Esophagus squamous epithelium (tissue), 5 donors: ENCODE measurements at regions of chr3 and their contacts with region 1.

Region 1: GRCh38 chr3:159828542-159828943 is 160.1 kb upstream of the IL12A start:
- DNase-seq: no peak
- H3K4me3 ChIP-seq: no peak overlapping the region
- H3K27ac ChIP-seq: peak overlapping the region; percentile 18 to 54 (median 38)
- H3K4me1 ChIP-seq: peaks cover 0 to 55% (median 15%) of the 10 kb centered on the region in 3 donors
- H3K27me3 ChIP-seq: no peaks in the 10 kb centered on the region
- CTCF ChIP-seq: peak in 5 of 6 experiments; percentile 18 to 63 (median 47)
- POLR2A ChIP-seq: no peak

Region 2: DNA sequence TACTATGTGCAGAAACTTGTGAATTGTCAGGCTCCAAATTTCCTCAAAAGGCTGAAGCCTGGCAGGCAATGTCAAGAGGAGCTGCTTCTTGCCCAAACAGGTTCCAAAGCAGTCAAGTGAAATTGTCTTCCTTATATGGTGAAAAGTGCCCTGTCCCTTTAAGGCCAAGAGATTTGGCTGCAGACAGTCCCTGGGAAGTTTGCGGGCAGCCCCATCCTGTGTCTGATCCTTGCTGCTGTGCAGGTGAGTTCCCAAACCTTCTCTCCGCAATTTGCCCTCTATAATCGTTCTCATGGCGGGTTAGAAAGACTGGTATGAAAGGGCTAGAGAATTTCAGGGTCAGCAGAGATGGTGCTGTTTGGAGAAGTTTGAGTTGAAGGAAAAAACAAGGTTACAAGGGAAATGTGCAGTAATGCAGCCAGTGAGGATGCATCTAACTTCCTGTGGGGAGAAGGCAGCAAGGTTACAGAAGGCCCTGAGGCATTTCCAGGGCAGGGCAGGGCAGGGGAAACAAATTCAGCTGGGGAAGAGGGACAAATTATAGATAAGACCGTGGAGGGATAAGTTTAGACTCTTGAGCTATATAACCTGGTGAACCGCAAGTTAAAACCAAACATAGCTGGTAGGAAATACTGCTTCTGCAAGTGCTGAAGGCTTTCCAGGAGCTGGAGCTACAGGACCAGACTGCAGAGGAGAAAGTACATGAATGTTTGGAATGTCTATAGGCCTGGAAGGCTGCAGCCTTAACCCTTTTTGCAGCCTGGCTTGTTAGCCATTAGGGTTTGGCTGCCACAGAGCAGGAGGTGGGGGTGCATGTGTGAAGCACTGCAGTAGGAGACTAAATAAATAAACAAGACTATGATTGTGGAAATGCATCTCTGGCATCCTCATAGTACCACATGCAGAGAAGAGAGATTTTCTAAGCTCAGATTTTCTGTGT is 96.1 kb before region 1 on chr3:
- intact Hi-C with region 1: no loop called
- DNase-seq: no peak
- H3K4me3 ChIP-seq: peak overlapping the region in 3 of 4 donors; percentile 15 to 42 (median 31)
- H3K27ac ChIP-seq: peak overlapping the region; percentile 14 to 60 (median 27)
- H3K4me1 ChIP-seq: peaks cover 0 to 17% (median 7%) of the 10 kb centered on the region in 3 donors
- H3K27me3 ChIP-seq: no peaks in the 10 kb centered on the region
- CTCF ChIP-seq: no peak
- POLR2A ChIP-seq: no peak

Region 3: DNA sequence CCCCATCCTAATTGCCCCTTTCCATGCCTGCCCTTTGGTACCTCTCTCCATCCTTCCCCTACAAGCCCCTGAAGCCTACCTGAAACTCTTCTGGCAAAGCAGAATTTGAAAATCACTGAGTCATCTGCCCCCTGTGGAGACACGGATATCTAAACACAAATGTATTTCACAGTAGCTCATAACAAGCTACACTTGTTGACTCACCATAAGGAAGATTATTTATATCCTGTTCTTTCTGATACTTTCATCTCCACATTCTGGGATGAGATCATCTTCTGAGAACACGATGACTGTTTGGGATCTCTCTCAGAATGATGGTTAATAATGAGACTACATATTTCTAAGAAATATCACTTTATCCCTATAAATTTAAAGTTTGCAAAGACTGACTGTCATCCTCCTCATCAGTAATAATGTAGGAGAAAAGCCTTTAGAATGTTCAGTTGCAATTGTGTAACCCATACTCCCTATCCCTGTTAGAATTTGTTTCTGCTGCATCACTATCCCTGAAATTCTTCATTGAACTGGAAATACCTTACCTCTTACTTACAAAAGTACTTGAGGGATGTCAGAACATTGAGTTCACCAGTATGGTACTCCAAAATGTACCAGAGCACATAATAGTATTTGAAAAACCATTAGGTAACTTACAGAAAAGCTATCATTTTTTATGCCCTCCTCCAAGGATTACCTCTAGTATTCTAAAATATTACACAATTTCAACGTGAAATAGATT is 44.0 kb after region 1 on chr3:
- intact Hi-C with region 1: loop called (anchors 10 kb)
- DNase-seq: no peak
- H3K4me3 ChIP-seq: no peak overlapping the region
- H3K27ac ChIP-seq: peak overlapping the region in 2 of 4 donors; percentile 48 to 49
- H3K4me1 ChIP-seq: peaks cover 0 to 18% (median 4%) of the 10 kb centered on the region in 3 donors
- H3K27me3 ChIP-seq: no peaks in the 10 kb centered on the region
- CTCF ChIP-seq: peak in 1 of 6 experiments; percentile 45
- POLR2A ChIP-seq: no peak

Region 4: DNA sequence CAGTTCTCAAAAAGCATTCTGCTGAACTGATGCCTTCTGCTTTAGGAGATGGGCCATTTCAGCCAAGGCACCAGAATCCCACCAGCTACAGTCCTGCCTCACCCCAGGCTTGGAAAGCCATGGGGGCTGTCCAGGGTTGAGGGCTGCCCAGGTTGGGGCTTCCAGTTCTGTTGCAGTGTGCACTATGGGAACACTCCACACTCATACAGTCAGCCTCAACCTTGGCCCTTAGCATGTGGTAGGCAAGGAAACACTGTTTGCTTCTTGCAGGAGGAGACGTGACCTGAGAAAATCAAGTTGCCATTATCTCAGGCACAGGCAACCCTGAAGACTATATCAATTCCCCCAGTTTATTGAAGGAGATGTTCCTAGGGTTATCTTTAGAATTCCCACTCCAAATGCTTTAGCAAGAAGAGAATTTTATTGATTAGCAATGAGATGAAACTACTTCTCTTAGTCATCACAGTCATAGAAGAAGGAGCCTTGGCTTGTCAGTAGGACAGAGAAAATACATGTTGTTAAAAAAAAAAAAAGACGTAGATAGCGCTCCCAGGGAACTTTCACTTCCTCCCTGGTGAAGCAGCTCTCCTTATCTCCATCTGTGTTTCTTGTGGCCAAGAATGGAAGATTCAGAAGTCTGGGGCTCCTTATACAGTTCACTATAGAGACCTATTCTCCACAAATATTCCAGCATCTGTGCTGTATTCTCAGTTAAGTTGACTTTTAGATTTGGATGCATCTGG is 121.8 kb after region 1 on chr3:
- intact Hi-C with region 1: no loop called
- DNase-seq: no peak
- H3K4me3 ChIP-seq: no peak overlapping the region
- H3K27ac ChIP-seq: no peak overlapping the region
- H3K4me1 ChIP-seq: no peaks in the 10 kb centered on the region
- H3K27me3 ChIP-seq: no peaks in the 10 kb centered on the region
- CTCF ChIP-seq: no peak
- POLR2A ChIP-seq: no peak

Region 5: GRCh38 chr3:159964166-159964973 is 135.8 kb after region 1 on chr3:
- intact Hi-C with region 1: no loop called
- DNase-seq: no peak
- H3K4me3 ChIP-seq: no peak overlapping the region
- H3K27ac ChIP-seq: no peak overlapping the region
- H3K4me1 ChIP-seq: no peaks in the 10 kb centered on the region
- H3K27me3 ChIP-seq: no peaks in the 10 kb centered on the region
- CTCF ChIP-seq: no peak
- POLR2A ChIP-seq: no peak

Region 6: DNA sequence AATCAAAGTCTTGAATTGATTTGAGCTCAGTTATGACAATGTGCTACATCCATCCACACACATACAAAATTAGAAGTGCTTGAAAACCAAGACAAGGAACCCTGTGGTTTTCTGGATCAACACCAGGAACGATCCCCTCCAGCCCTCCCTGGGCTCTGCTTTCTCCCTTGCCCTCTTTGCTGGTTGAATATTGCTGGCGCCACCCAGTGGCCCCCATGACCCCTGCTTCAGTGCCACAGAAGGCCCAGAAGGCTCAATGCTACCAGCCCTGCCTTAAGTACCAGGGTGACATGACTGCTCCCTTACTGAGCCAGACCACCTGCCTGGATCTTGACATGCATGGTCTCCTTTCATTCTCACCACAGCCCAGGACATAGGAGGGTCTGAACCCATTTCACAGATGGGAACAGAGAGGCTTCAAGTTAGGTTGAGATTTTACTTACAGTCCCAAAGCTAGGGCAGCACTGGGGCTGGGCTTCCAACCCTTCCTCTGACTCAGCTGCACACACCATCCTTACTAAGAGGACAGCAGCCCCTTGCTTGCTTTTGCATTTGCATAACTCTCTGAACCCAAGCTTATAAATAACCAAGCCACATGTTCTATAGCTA is 175.1 kb after region 1 on chr3:
- intact Hi-C with region 1: loop called (anchors 5 kb)
- DNase-seq: no peak
- H3K4me3 ChIP-seq: no peak overlapping the region
- H3K27ac ChIP-seq: no peak overlapping the region
- H3K4me1 ChIP-seq: peaks cover 0 to 27% (median 0%) of the 10 kb centered on the region in 3 donors
- H3K27me3 ChIP-seq: no peaks in the 10 kb centered on the region
- CTCF ChIP-seq: peak; percentile 26 to 44 (median 36)
- POLR2A ChIP-seq: no peak